Spleen (tissue), 13 donors: ENCODE measurements at regions of chr7 and their contacts with region 1.

Region 1: DNA sequence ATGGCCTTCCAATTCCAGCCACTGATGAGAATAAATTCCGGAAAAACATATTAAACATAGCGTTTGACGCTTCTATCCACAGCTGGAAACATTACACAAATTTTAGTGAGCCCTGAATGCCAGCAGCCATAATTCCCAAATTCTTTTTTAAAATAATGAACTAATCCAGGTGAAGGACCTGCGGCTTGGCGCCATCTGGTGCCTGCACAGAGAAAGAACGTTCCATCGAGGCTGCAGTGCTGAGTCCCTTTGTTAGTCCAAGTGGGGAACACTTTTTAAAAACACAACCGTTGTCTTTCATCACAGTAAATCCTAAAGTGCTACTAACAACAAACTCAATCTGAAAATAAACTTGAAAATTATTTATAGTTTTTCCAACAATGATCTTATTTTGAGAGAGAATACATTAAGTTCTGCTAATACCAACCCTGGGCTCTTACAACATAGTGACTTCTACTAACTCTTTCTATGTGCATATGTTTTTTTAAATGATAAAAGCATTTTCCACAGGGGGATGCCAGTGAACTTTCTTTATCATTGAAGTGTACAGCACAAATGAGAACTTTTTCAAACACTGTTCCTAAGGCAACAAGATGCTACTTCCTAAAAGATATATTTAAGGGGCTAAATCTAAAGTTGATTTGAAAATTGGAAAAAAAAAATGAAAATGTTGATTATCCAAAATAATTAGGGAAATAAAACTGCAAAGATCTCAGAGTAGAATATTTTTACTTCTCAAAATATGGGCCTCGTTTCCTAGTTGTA is 166.9 kb upstream of the RNF32 start:
- DNase-seq: no peak
- H3K4me3 ChIP-seq: no peak overlapping the region
- H3K27ac ChIP-seq: no peak overlapping the region
- H3K4me1 ChIP-seq: peaks cover 0 to 11% (median 0%) of the 10 kb centered on the region in 6 donors
- H3K27me3 ChIP-seq: peaks cover 0 to 34% (median 0%) of the 10 kb centered on the region in 7 donors
- CTCF ChIP-seq: peak in 8 of 11 experiments; percentile 26 to 56 (median 48)
- POLR2A ChIP-seq: no peak

Region 2: DNA sequence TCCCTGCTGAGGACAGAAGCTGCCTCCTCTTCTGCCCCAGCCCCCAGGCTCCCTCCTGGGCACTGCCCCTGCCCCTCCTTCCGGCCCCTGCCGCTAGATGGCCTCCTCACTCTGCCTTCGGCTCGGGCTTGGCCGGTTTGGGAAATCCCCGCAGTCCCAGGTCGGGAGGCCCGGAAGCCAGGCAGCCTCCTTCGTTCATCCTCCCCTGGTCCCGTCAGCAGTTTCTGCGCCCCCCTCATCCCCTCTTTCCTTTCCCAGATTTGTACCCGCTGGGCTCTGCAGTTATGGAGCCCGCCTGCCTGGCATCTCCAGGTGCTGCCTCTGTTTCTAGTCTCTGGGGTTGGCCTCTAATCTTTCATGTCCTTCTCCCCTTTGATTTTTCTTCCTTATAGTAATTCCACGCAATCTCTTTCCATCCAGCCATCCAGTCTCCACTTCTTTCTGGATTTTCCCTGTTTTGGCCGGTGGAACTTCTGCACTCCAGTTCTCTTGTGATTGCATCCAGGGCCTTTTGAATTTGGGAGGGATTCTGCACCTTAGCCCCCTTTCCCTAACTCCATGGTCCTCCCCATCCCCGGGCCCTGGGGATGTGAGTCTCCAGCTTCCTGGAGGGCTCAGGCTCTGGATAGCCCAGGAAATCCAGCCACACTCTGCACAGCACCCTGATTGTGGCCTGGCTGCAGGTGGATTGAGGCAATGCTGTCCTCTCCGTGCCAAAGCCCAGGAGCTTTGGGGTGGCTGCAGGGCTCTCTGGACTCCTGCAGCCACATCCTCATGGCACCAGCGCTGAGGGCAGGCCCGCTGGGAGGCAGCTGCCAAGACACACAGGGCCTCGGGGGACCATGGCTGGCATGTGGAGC is 658.1 kb before region 1 on chr7:
- intact Hi-C with region 1: loop called (anchors 10 kb)
- DNase-seq: peak; percentile 86
- H3K4me3 ChIP-seq: no peak overlapping the region
- H3K27ac ChIP-seq: no peak overlapping the region
- H3K4me1 ChIP-seq: peaks cover 0 to 28% (median 16%) of the 10 kb centered on the region in 6 donors
- H3K27me3 ChIP-seq: peaks cover 0 to 96% (median 52%) of the 10 kb centered on the region in 7 donors
- CTCF ChIP-seq: peak in 10 of 11 experiments; percentile 30 to 66 (median 53)
- POLR2A ChIP-seq: no peak